B cell (primary cell): ENCODE measurements at regions of chr2 and their contacts with region 1.

Region 1: GRCh38 chr2:20650880-20651730 is at the start of gene HS1BP3:
- DNase-seq: peak; percentile 96
- ATAC-seq: peak; percentile 96
- H3K4me3 ChIP-seq: peak within 1 kb of the TSS; percentile 73 to 90 (median 81)
- H3K4me3 Mint-ChIP-seq: peak within 1 kb of the TSS; percentile 88
- H3K27ac ChIP-seq: peak within 1 kb of the TSS; percentile 93 to 94
- H3K27ac Mint-ChIP-seq: peak within 1 kb of the TSS; percentile 97
- H3K4me1 ChIP-seq: peaks cover 41 to 49% of the 10 kb centered on the region in 2 donors
- H3K4me1 Mint-ChIP-seq: peaks cover 50% of the 10 kb centered on the region
- H3K27me3 ChIP-seq: peaks cover 0 to 4% (median 0%) of the 10 kb centered on the region in 4 experiments
- H3K27me3 Mint-ChIP-seq: peaks cover 3% of the 10 kb centered on the region
- CTCF ChIP-seq: peak; percentile 90
- total RNA-seq, gene HS1BP3: 27.5 and 27.8 TPM in 2 replicates

Region 2: GRCh38 chr2:20051532-20052228 is 599.4 kb before region 1 on chr2 and contains the start of gene LAPTM4A:
- CTCF ChIA-PET with region 1: no interaction called
- POLR2A ChIA-PET with region 1: no interaction called
- intact Hi-C with region 1: loop called (anchors 2 kb)
- DNase-seq: peak; percentile 99
- ATAC-seq: peak; percentile 89
- H3K4me3 ChIP-seq: peak within 1 kb of the TSS; percentile 49 to 99 (median 85)
- H3K4me3 Mint-ChIP-seq: no peak within 1 kb of the TSS
- H3K27ac ChIP-seq: peak within 1 kb of the TSS; percentile 88 to 98
- H3K27ac Mint-ChIP-seq: no peak within 1 kb of the TSS
- H3K4me1 ChIP-seq: peaks cover 25 to 28% of the 10 kb centered on the region in 2 donors
- H3K4me1 Mint-ChIP-seq: peaks cover 30% of the 10 kb centered on the region
- H3K27me3 ChIP-seq: peaks cover 0 to 15% (median 7%) of the 10 kb centered on the region in 4 experiments
- H3K27me3 Mint-ChIP-seq: peaks cover 14% of the 10 kb centered on the region
- CTCF ChIP-seq: no peak
- total RNA-seq, gene LAPTM4A: 70.1 and 74.4 TPM in 2 replicates

Region 3: DNA sequence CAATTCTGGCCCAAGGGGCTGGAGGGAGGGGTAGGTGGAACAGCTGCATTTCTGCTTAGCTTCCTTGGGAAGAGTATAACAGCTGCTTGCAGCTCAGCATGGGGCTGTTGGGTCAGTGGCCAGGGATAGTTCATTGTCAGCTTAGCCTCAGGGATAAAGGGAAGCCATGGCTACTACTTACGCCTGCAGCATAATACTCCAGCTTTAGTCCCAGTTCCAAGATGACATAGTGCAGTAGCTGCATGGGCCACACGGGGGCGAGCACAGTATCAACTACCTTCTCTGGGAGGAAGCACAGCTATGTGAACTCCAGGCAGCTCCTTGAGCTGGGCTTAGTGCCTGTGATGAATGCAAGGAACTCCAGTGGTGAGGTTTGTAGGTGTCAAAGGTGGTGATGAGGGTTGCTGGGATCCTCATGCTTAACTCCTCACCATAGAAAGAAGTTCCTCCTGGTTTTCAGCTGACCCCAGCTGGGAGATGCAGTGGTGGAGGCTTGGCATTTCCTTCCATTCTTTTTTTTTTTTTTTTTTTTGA is 239.7 kb before region 1 on chr2:
- CTCF ChIA-PET with region 1: interaction called, 12 read pairs
- POLR2A ChIA-PET with region 1: interaction called, 9 read pairs
- intact Hi-C with region 1: no loop called
- DNase-seq: peak; percentile 82
- ATAC-seq: peak; percentile 99
- H3K4me3 ChIP-seq: no peak overlapping the region
- H3K4me3 Mint-ChIP-seq: no peak overlapping the region
- H3K27ac ChIP-seq: no peak overlapping the region
- H3K27ac Mint-ChIP-seq: no peak overlapping the region
- H3K4me1 ChIP-seq: no peaks in the 10 kb centered on the region
- H3K4me1 Mint-ChIP-seq: peaks cover 2% of the 10 kb centered on the region
- H3K27me3 ChIP-seq: peaks cover 0 to 12% (median 3%) of the 10 kb centered on the region in 4 experiments
- H3K27me3 Mint-ChIP-seq: peaks cover 9% of the 10 kb centered on the region
- CTCF ChIP-seq: peak; percentile 80

Region 4: DNA sequence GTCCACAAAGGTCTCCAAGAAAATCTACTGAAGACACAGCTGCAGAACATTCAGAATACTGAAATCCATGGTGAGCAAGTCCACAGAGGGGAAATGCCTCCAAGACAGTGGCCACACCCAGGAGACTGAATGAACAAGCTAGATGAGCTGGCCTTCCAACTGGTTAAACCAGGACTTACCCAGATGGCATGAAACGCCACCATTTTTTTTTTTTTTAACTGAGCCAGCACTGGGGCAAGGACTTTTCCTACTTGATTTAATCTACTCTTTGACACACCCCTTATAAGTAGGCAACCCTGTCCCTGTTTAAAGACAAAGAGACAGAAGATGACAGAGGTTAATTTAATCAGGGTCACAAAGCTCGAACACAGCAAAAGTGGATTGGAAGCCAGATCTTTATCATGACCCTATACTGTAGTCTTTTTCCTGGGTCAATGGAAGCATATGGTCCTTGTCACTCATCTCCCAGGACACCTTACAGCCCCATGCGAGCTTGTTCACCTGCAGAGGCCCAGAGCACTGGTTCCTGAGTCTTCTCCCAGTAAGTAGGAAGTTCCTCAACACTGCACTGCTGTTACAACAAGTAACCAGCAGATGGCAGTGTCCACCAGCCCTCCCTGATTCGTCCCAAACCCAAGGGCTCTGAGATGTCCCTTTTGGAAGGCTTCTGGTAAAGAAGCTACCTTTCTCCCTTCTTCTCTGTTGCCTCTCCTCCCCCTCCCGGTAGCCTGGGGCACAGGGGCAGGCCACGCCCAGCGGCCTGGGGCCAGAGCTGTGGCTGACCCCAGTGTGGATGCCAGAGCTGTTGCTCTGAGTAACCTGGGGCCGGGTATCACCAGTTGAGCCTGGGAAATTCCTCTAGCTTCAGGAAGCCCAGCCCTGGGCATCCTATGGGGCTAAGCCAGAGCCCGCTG is 10.2 kb after region 1 on chr2:
- CTCF ChIA-PET with region 1: interaction called, 139 read pairs
- POLR2A ChIA-PET with region 1: interaction called, 11 read pairs
- intact Hi-C with region 1: loop called (anchors 1 kb)
- DNase-seq: peak; percentile 86
- ATAC-seq: peak; percentile 73
- H3K4me3 ChIP-seq: no peak overlapping the region
- H3K4me3 Mint-ChIP-seq: no peak overlapping the region
- H3K27ac ChIP-seq: no peak overlapping the region
- H3K27ac Mint-ChIP-seq: no peak overlapping the region
- H3K4me1 ChIP-seq: peaks cover 11 to 28% of the 10 kb centered on the region in 2 donors
- H3K4me1 Mint-ChIP-seq: peaks cover 22% of the 10 kb centered on the region
- H3K27me3 ChIP-seq: peaks cover 0 to 55% (median 7%) of the 10 kb centered on the region in 4 experiments
- H3K27me3 Mint-ChIP-seq: peaks cover 26% of the 10 kb centered on the region
- CTCF ChIP-seq: peak; percentile 98

Region 5: GRCh38 chr2:20675701-20676352 is 24.7 kb after region 1 on chr2:
- CTCF ChIA-PET with region 1: interaction called, 33 read pairs
- POLR2A ChIA-PET with region 1: interaction called, 10 read pairs
- intact Hi-C with region 1: no loop called
- DNase-seq: peak; percentile 83
- ATAC-seq: peak; percentile 79
- H3K4me3 ChIP-seq: peak overlapping the region in 1 of 5 experiments; percentile 15
- H3K4me3 Mint-ChIP-seq: peak overlapping the region; percentile 80
- H3K27ac ChIP-seq: peak overlapping the region; percentile 63 to 82
- H3K27ac Mint-ChIP-seq: peak overlapping the region; percentile 98
- H3K4me1 ChIP-seq: peaks cover 35 to 86% of the 10 kb centered on the region in 2 donors
- H3K4me1 Mint-ChIP-seq: peaks cover 59% of the 10 kb centered on the region
- H3K27me3 ChIP-seq: peaks cover 0 to 16% (median 4%) of the 10 kb centered on the region in 4 experiments
- H3K27me3 Mint-ChIP-seq: no peaks in the 10 kb centered on the region
- CTCF ChIP-seq: no peak

Region 6: DNA sequence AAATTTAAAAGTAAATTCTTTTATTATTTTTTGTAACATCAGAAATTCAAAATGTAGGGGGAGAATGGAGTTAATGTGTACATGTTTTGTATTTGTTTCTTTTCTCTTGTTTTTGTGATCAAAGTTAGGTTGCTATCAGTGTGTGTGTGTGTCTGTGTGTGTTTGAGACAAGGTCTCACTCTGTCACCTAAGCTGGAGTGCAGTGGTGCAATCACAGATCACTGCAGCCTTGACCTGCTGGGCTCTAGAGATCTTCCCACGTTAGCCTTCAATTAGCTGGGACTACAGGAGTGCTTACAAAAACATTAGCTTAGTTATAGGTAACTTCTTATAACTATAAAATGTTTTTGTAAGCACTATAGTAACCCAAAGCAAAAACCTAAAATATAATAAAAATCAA is 66.5 kb after region 1 on chr2:
- CTCF ChIA-PET with region 1: no interaction called
- POLR2A ChIA-PET with region 1: no interaction called
- intact Hi-C with region 1: no loop called
- DNase-seq: no peak
- ATAC-seq: no peak
- H3K4me3 ChIP-seq: no peak overlapping the region
- H3K4me3 Mint-ChIP-seq: no peak overlapping the region
- H3K27ac ChIP-seq: no peak overlapping the region
- H3K27ac Mint-ChIP-seq: no peak overlapping the region
- H3K4me1 ChIP-seq: no peaks in the 10 kb centered on the region
- H3K4me1 Mint-ChIP-seq: peaks cover 8% of the 10 kb centered on the region
- H3K27me3 ChIP-seq: no peaks in the 10 kb centered on the region
- H3K27me3 Mint-ChIP-seq: no peaks in the 10 kb centered on the region
- CTCF ChIP-seq: no peak

Region 7: GRCh38 chr2:20962939-20963557 is 311.9 kb after region 1 on chr2:
- CTCF ChIA-PET with region 1: interaction called, 14 read pairs
- POLR2A ChIA-PET with region 1: interaction called, 3 read pairs
- intact Hi-C with region 1: no loop called
- DNase-seq: peak; percentile 78
- ATAC-seq: peak; percentile 65
- H3K4me3 ChIP-seq: no peak overlapping the region
- H3K4me3 Mint-ChIP-seq: no peak overlapping the region
- H3K27ac ChIP-seq: no peak overlapping the region
- H3K27ac Mint-ChIP-seq: no peak overlapping the region
- H3K4me1 ChIP-seq: no peaks in the 10 kb centered on the region
- H3K4me1 Mint-ChIP-seq: no peaks in the 10 kb centered on the region
- H3K27me3 ChIP-seq: peaks cover 0 to 16% (median 4%) of the 10 kb centered on the region in 4 experiments
- H3K27me3 Mint-ChIP-seq: peaks cover 26% of the 10 kb centered on the region
- CTCF ChIP-seq: peak; percentile 92

Region 8: GRCh38 chr2:21234464-21235120 is 583.5 kb after region 1 on chr2:
- CTCF ChIA-PET with region 1: no interaction called
- POLR2A ChIA-PET with region 1: no interaction called
- intact Hi-C with region 1: no loop called
- DNase-seq: no peak
- ATAC-seq: no peak
- H3K4me3 ChIP-seq: no peak overlapping the region
- H3K4me3 Mint-ChIP-seq: no peak overlapping the region
- H3K27ac ChIP-seq: no peak overlapping the region
- H3K27ac Mint-ChIP-seq: no peak overlapping the region
- H3K4me1 ChIP-seq: peaks cover 11 to 13% of the 10 kb centered on the region in 2 donors
- H3K4me1 Mint-ChIP-seq: peaks cover 21% of the 10 kb centered on the region
- H3K27me3 ChIP-seq: no peaks in the 10 kb centered on the region
- H3K27me3 Mint-ChIP-seq: no peaks in the 10 kb centered on the region
- CTCF ChIP-seq: no peak